Naive thymus-derived CD4-positive, alpha-beta T cell (primary cell): ENCODE measurements at regions of chr1 and their contacts with region 1.

Region 1: DNA sequence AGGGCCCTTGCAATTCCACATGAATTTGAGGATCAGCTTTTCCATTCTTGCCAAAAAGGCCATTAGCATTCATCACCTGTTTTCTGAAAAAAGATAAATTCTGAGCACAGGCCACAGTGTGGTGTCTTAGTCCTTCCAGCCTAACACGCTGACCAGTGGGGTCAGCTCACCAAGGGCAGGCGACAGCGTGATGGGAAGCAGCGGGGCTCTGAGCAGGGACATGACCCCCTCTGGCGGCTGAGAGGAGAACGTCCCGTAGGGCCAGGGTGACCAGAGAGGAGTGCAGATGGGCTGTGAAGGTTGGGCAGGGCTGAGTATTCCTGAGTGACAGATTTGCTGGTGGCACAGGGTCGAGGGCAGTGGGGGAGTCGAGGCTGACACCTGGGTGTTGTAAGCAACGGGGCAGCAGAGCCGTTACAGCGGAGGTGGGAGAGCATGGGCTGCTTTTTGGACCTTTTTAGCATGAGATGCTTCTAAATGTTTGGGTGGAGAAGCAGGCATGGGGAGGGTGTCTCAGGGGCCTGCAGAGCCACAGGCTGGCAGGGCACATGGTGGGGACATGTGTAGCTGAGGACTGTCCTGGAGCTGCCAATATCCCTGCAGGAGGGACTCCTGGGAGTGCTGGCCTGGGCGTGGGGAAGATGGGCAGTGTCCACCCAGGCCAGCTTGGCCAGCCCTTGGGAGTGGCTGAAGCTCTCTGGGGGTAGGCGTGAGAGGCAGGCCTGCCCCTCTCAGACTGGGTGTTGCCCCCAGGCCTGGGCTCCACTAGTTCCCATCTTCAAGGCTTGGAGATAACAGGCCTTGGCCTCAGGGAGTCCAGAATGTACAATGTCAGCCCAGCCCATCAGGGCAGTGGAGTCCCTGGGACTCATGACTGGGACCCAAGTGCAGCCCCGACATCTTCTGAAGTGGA is 8.6 kb upstream of the CALML6 start:
- DNase-seq: peak in 8 of 9 donors; percentile 49 to 77 (median 54)
- ATAC-seq: peak; percentile 40
- H3K4me3 ChIP-seq: no peak overlapping the region
- H3K4me3 Mint-ChIP-seq: peak overlapping the region; percentile 5 to 81 (median 58)
- H3K27ac ChIP-seq: no peak overlapping the region
- H3K27ac Mint-ChIP-seq: peak overlapping the region in 7 of 9 donors; percentile 2 to 72 (median 44)
- H3K4me1 ChIP-seq: peaks cover 5 to 10% of the 10 kb centered on the region in 2 donors
- H3K4me1 Mint-ChIP-seq: peaks cover 12 to 18% (median 15%) of the 10 kb centered on the region in 7 donors
- H3K27me3 ChIP-seq: no peaks in the 10 kb centered on the region
- H3K27me3 Mint-ChIP-seq: no peaks in the 10 kb centered on the region

Region 2: DNA sequence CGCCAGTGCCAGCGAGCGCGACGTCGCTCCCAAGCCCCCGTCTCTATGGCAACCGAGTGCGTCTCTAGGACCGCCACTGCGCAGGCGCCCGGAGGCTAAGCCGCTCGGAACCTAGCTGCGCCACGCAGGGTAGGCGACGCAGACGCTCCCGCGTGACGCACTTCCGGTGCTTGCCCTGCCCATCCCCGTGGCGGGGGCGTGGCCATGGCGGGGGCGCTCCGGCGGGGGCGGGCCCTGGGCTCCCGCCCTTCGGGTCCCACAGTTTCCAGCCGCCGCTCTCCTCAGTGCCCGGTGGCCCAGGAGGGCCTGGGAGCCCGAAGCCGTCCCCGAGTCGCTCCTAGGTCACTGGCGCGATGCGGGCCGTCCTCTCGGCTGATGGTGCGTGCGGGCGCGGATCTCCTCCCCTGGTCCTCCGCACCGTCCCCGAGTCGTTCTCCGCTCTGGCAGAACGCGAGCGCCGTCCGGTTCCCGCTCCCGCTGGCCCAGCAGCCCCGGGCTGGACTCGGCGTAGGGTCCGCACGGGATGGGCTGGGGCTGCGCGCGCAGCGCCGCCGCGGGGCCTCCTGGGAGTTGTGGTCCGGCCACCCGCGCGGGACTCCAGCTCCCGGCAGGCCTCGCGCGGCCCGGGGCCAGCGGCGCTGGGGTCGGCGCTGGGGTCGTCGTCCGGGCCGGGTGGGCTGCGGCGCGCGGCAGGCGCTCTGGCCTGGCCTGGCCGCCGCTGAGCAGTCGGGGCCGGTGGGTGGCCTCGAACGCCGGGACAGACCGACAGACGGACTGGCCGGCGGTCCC is 291.0 kb before region 1 on chr1 and contains the start of gene MIB2:
- CTCF ChIA-PET with region 1: no interaction called
- POLR2A ChIA-PET with region 1: interaction called, 3 read pairs
- intact Hi-C with region 1: loop called in 1 of 2 experiments (anchors 1 kb)
- DNase-seq: peak; percentile 98 to 100 (median 99)
- ATAC-seq: peak; percentile 94
- H3K4me3 ChIP-seq: peak within 1 kb of the TSS; percentile 74
- H3K4me3 Mint-ChIP-seq: peak within 1 kb of the TSS; percentile 93 to 99 (median 96)
- H3K27ac ChIP-seq: peak within 1 kb of the TSS; percentile 100
- H3K27ac Mint-ChIP-seq: peak within 1 kb of the TSS; percentile 94 to 100 (median 99)
- H3K4me1 ChIP-seq: peaks cover 15 to 21% of the 10 kb centered on the region in 2 donors
- H3K4me1 Mint-ChIP-seq: peaks cover 18 to 36% (median 32%) of the 10 kb centered on the region in 7 donors
- H3K27me3 ChIP-seq: no peaks in the 10 kb centered on the region
- H3K27me3 Mint-ChIP-seq: no peaks in the 10 kb centered on the region
- total RNA-seq, gene MIB2: 45.6 to 129 (median 65.7) TPM

Region 3: DNA sequence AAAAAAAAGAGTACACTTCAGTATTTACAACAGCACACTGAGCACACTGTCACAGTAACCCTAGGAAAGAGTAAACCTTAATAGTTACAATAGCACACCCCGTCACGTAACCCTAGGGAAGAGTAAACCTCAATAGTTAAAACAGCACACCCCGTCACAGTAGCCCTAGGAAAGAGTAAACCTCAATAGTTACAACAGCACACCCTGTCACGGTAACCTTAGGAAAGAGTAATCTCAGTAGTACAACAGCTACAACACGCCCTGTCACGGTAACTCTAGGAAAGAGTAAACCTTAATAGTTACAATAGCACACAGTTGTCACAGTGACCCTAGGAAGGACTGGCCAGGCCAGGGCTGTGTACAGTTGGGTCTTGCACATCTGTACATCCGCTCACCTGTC is 185.2 kb before region 1 on chr1:
- CTCF ChIA-PET with region 1: no interaction called
- POLR2A ChIA-PET with region 1: interaction called, 5 read pairs
- intact Hi-C with region 1: loop called in 1 of 2 experiments (anchors 2 kb)
- DNase-seq: no peak
- ATAC-seq: no peak
- H3K4me3 ChIP-seq: no peak overlapping the region
- H3K4me3 Mint-ChIP-seq: peak overlapping the region in 2 of 10 donors; percentile 4 to 43
- H3K27ac ChIP-seq: no peak overlapping the region
- H3K27ac Mint-ChIP-seq: peak overlapping the region in 5 of 9 donors; percentile 28 to 67 (median 51)
- H3K4me1 ChIP-seq: no peaks in the 10 kb centered on the region
- H3K4me1 Mint-ChIP-seq: peaks cover under 1 to 18% (median 12%) of the 10 kb centered on the region in 7 donors
- H3K27me3 ChIP-seq: no peaks in the 10 kb centered on the region
- H3K27me3 Mint-ChIP-seq: peaks cover 0 to 4% (median 0%) of the 10 kb centered on the region in 5 donors

Region 4: DNA sequence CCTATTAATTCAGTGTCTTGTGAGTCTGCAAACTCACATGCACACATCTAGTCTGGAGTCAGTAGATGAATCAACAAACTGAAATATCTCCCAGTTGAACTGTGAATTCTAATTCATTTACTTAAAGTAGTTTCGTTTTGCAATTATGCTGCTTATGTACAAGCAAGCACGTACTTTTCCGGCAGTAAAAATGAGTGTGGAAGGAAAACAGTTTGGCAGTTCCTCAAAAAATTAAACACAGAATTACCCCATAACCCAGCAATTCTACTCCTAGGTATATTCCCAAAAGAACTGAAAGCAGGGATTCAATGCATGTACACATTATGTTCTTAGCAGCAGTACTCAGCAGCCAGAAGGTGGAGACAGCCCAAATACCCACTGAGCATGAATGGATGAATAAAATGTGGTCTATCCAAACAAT is 64.9 kb before region 1 on chr1:
- CTCF ChIA-PET with region 1: no interaction called
- POLR2A ChIA-PET with region 1: no interaction called
- intact Hi-C with region 1: loop called in 1 of 2 experiments (anchors 5 kb)
- DNase-seq: no peak
- ATAC-seq: no peak
- H3K4me3 ChIP-seq: no peak overlapping the region
- H3K4me3 Mint-ChIP-seq: peak overlapping the region; percentile 29 to 78 (median 62)
- H3K27ac ChIP-seq: peak overlapping the region; percentile 30
- H3K27ac Mint-ChIP-seq: peak overlapping the region; percentile 51 to 89 (median 80)
- H3K4me1 ChIP-seq: peaks cover 5 to 13% of the 10 kb centered on the region in 2 donors
- H3K4me1 Mint-ChIP-seq: peaks cover 27 to 67% (median 59%) of the 10 kb centered on the region in 7 donors
- H3K27me3 ChIP-seq: no peaks in the 10 kb centered on the region
- H3K27me3 Mint-ChIP-seq: no peaks in the 10 kb centered on the region

Region 5: GRCh38 chr1:1919304-1920056 is 13.0 kb after region 1 on chr1:
- CTCF ChIA-PET with region 1: interaction called, 3 read pairs
- POLR2A ChIA-PET with region 1: interaction called, 5 read pairs
- intact Hi-C with region 1: loop called (anchors 1 kb)
- DNase-seq: peak; percentile 99 to 100 (median 100)
- ATAC-seq: peak; percentile 95
- H3K4me3 ChIP-seq: peak overlapping the region; percentile 61
- H3K4me3 Mint-ChIP-seq: peak overlapping the region; percentile 52 to 79 (median 68)
- H3K27ac ChIP-seq: peak overlapping the region; percentile 58
- H3K27ac Mint-ChIP-seq: peak overlapping the region in 8 of 9 donors; percentile 51 to 89 (median 82)
- H3K4me1 ChIP-seq: peaks cover 7 to 16% of the 10 kb centered on the region in 2 donors
- H3K4me1 Mint-ChIP-seq: peaks cover 0 to 7% (median 0%) of the 10 kb centered on the region in 7 donors
- H3K27me3 ChIP-seq: no peaks in the 10 kb centered on the region
- H3K27me3 Mint-ChIP-seq: peaks cover 0 to 4% (median 0%) of the 10 kb centered on the region in 5 donors

Region 6: DNA sequence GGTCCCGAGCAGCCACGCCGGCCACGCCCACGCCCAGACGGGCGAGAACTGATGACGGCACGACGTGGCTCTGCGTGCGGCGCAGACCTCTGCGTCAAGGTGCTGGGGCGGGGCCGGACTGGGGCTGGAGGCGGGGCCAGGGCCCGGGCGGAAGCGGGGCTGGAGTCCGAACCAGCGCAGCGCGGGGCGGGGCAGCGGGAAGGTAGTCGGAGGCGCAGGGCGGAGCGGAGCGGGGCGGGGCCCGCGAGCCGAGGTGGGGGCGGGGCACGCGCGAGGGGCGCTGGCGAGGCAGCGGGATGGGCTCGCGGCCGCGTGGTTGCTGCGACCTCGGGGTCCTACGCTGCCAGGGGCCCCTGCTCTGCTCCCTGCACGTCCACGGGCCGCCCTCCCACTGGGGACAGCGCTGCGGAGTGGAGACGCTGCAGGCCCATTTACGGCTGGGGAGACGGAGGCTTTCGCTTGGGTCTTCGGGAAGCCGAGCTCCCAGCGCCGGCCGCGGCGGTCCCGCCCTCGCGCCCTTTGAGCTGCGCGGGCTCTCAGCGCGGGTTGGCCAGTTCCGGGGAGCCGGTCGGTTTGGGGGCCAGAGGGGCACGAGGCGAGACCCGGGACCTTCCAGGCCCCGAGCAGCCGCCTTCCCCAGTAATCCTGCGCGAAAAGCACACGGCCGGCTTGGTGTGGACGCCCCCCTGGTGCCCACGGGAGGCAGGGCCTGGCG is 506.2 kb after region 1 on chr1 and contains the start of gene PEX10:
- CTCF ChIA-PET with region 1: no interaction called
- POLR2A ChIA-PET with region 1: no interaction called
- intact Hi-C with region 1: loop called in 1 of 2 experiments (anchors 1 kb)
- DNase-seq: peak; percentile 95 to 100 (median 98)
- ATAC-seq: peak; percentile 97
- H3K4me3 ChIP-seq: peak within 1 kb of the TSS; percentile 71
- H3K4me3 Mint-ChIP-seq: peak within 1 kb of the TSS; percentile 83 to 91 (median 86)
- H3K27ac ChIP-seq: peak within 1 kb of the TSS; percentile 95
- H3K27ac Mint-ChIP-seq: peak within 1 kb of the TSS; percentile 31 to 94 (median 87)
- H3K4me1 ChIP-seq: peaks cover 37 to 45% of the 10 kb centered on the region in 2 donors
- H3K4me1 Mint-ChIP-seq: peaks cover 27 to 45% (median 35%) of the 10 kb centered on the region in 7 donors
- H3K27me3 ChIP-seq: no peaks in the 10 kb centered on the region
- H3K27me3 Mint-ChIP-seq: no peaks in the 10 kb centered on the region
- total RNA-seq, gene PEX10: 8.7 to 14.9 (median 12.3) TPM